ENCODE measurements at regions of chr14 and their contacts with region 1.

Region 1: DNA sequence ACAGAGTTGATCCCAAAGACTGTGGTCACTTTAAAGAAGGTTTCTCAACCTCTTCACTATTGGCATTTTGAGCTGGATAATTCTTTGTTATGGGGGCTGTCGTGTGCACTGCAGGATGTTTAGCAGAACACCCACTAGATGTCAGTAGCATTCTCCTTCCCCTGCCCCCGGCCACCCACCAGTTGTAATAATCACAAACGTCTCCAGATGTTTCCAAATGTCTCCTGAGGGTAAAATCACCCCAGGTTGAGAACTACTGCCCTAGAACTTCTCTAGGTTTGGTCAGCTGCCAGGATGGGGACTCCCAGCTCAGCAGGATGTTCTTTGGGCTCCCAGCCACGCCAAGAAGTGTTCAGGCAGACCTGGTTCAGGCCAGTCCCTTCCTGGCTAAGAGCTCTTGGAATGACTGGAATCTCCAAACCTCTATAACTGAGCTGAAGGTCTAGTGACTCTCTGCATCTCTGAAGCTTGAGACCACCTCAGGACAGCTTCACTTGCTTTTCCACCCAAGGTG is 12.5 kb upstream of the AJUBA start:
- DNase-seq: peak; percentile 32
- ATAC-seq: peak; percentile 87
- H3K4me3 Mint-ChIP-seq: no peak overlapping the region
- H3K27ac Mint-ChIP-seq: peak overlapping the region; percentile 91
- H3K4me1 Mint-ChIP-seq: peaks cover 5% of the 10 kb centered on the region
- H3K27me3 Mint-ChIP-seq: no peaks in the 10 kb centered on the region; the same call in 1 of the 2 replicates
- CTCF ChIP-seq: 0 out of 2 replicates have a peak, but pooled peaks have one; percentile 14

Region 2: GRCh38 chr14:22808388-22809209 is 186.2 kb before region 1 on chr14:
- CTCF ChIA-PET with region 1: no interaction called
- POLR2A ChIA-PET with region 1: no interaction called
- DNase-seq: no peak
- ATAC-seq: no peak
- H3K4me3 Mint-ChIP-seq: no peak overlapping the region
- H3K27ac Mint-ChIP-seq: no peak overlapping the region
- H3K4me1 Mint-ChIP-seq: peaks cover 14% of the 10 kb centered on the region
- H3K27me3 Mint-ChIP-seq: no peaks in the 10 kb centered on the region
- CTCF ChIP-seq: no peak

Region 3: GRCh38 chr14:22892488-22892887 is 102.3 kb before region 1 on chr14:
- CTCF ChIA-PET with region 1: no interaction called
- POLR2A ChIA-PET with region 1: no interaction called
- DNase-seq: no peak
- ATAC-seq: peak; percentile 46; the same call in 1 of the 2 replicates
- H3K4me3 Mint-ChIP-seq: no peak overlapping the region
- H3K27ac Mint-ChIP-seq: no peak overlapping the region
- H3K4me1 Mint-ChIP-seq: peaks cover 14% of the 10 kb centered on the region
- H3K27me3 Mint-ChIP-seq: peaks cover 37% of the 10 kb centered on the region
- CTCF ChIP-seq: no peak

Region 4: DNA sequence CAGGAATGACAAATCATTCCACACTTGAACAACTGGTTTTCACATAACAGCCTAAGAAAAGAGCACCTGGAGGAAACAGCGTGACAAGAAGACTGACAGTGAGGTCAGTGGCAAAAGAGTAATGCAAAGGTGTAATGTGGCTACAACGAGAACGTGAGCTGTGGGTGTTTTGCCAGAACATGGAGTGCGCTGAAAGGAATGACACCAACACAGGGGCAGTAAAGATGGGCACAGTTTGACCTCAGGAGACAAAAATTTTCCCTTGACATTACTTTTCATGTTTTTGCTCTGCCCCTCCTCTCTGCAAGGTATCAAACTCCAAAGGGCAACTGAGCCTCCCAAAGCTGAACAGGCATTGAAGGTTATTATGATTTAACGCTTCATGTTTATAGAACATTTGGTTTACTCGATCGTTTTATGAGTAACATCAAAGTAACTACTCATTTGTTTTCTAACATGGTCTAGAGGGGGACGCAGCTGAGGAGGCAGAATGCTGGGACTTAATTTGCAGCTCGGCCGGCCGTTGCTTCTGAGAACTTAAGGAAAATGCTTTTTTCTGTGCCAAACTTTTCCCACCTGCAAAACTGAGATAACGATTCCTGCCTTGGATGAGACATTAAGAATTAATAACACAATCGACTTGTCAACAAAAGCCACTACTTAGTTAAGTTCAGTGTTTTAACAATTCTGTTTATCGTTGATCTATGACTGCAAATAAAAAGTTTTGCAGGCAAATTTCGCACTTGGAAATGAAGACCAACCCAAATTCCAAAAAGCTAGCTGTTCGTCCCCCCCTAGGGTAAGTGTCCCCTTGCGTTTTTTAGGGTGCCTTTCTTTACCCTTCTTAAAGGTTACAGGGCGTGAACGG is 38.9 kb before region 1 on chr14:
- CTCF ChIA-PET with region 1: interaction called, 19 read pairs
- POLR2A ChIA-PET with region 1: interaction called, 8 read pairs
- DNase-seq: no peak
- ATAC-seq: no peak
- H3K4me3 Mint-ChIP-seq: peak overlapping the region; percentile 91
- H3K27ac Mint-ChIP-seq: peak overlapping the region; percentile 94
- H3K4me1 Mint-ChIP-seq: peaks cover 20% of the 10 kb centered on the region
- H3K27me3 Mint-ChIP-seq: no peaks in the 10 kb centered on the region
- CTCF ChIP-seq: no peak

Region 5: DNA sequence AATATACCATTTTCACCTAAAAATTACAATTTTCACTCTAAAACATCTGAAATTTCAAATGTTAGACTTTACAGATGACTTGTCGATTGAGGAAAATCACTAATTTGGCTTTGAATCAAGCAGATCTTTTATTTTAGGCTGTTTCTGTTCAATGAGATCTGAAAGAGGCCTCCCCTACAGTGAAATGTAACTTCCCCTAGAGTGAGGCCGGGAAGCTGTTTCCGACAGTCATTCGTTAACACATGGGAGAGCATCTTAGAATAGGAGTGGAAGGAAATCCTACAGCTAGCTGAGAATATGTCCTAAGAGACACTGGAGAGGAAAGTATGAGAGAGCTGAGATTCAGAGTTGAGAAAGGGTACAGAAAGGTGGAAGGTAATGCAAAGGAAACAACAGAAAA is 20.8 kb after region 1 on chr14:
- CTCF ChIA-PET with region 1: interaction called, 19 read pairs
- POLR2A ChIA-PET with region 1: no interaction called
- DNase-seq: no peak
- ATAC-seq: no peak
- H3K4me3 Mint-ChIP-seq: no peak overlapping the region
- H3K27ac Mint-ChIP-seq: peak overlapping the region; percentile 4; the same call in 1 of the 2 replicates
- H3K4me1 Mint-ChIP-seq: peaks cover 2% of the 10 kb centered on the region; the same call in 1 of the 2 replicates
- H3K27me3 Mint-ChIP-seq: no peaks in the 10 kb centered on the region
- CTCF ChIP-seq: no peak

Region 6: DNA sequence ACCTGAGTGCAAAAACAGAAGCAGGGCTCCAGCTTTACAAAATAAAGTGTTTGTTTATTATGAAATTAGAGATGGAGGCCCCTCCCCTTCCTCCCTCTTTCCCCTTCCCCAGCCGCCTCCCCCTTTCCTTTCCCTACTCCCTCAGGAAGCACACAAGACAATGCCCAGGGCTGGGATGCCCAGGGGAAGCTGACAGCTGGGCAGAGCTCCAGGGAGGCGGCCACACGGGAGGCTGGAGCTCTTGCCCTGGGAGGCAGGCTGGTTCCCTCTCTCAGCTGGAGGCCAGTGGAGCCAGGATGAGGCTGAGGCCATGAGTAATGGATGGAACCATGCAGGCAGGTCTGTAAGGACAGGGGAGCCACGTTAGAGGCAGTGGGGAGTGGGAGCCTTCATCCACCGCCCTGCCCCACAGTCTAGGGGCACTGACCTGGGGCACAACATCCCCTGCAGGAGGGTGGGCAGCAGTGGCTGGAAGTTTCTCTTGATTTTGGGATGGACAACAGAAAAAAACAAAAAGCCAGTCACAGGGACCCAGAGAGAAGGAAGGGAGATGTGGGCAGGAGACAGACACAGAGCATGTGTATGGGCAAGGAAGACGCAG is 52.3 kb after region 1 on chr14:
- CTCF ChIA-PET with region 1: interaction called, 67 read pairs
- POLR2A ChIA-PET with region 1: interaction called, 4 read pairs
- DNase-seq: no peak
- ATAC-seq: no peak
- H3K4me3 Mint-ChIP-seq: no peak overlapping the region
- H3K27ac Mint-ChIP-seq: peak overlapping the region; percentile 24; the same call in 1 of the 2 replicates
- H3K4me1 Mint-ChIP-seq: peaks cover 9% of the 10 kb centered on the region; the same call in 1 of the 2 replicates
- H3K27me3 Mint-ChIP-seq: no peaks in the 10 kb centered on the region
- CTCF ChIP-seq: no peak

Region 7: DNA sequence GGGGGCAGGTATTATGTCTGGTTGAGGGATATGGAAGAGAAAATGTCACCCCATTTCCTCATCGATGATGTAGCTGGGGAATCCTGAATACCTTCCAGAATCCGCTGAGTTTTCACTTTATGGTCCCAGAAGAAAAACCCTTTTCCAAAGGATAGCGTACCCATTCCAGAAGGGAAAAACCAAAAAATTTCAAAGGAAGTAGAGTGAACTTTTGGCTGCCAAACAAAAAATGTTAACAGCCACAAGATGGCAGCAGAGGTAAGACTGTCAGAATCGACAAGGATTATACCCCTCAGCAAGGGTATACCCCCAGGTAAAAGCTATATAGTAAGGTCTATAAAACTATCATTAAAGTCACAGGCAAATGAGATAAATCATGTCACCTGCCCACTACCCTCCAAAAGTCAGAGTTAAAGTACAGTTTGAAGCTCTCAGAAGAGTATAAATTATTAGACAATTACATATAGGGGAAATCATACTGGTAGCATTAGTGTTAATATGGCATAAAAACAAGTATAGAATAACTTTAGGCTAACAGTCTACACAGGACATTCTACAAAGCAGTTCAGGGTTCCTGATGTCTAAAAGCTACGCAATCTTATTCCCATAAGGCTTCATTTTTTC is 82.1 kb after region 1 on chr14:
- CTCF ChIA-PET with region 1: interaction called, 13 read pairs
- POLR2A ChIA-PET with region 1: interaction called, 3 read pairs
- DNase-seq: no peak
- ATAC-seq: peak; percentile 59
- H3K4me3 Mint-ChIP-seq: no peak overlapping the region
- H3K27ac Mint-ChIP-seq: no peak overlapping the region
- H3K4me1 Mint-ChIP-seq: peaks cover 12% of the 10 kb centered on the region
- H3K27me3 Mint-ChIP-seq: no peaks in the 10 kb centered on the region
- CTCF ChIP-seq: peak; percentile 45

Measured in WTC11 (cell line).